Psoas muscle (tissue), 8 donors: ENCODE measurements at regions of chr16 and their contacts with region 1.

Region 1: GRCh38 chr16:75198135-75198600 is 8.8 kb downstream of the CTRB2 start:
- DNase-seq: no peak
- ATAC-seq: no peak
- H3K4me3 ChIP-seq: no peak overlapping the region
- H3K27ac ChIP-seq: no peak overlapping the region
- H3K4me1 ChIP-seq: no peaks in the 10 kb centered on the region
- H3K27me3 ChIP-seq: peaks cover 0 to 22% (median 0%) of the 10 kb centered on the region in 3 donors
- CTCF ChIP-seq: no peak

Region 2: GRCh38 chr16:75138636-75139035 is 59.5 kb before region 1 on chr16:
- intact Hi-C with region 1: no loop called
- DNase-seq: no peak
- ATAC-seq: no peak
- H3K4me3 ChIP-seq: no peak overlapping the region
- H3K27ac ChIP-seq: no peak overlapping the region
- H3K4me1 ChIP-seq: no peaks in the 10 kb centered on the region
- H3K27me3 ChIP-seq: no peaks in the 10 kb centered on the region
- CTCF ChIP-seq: no peak

Region 3: DNA sequence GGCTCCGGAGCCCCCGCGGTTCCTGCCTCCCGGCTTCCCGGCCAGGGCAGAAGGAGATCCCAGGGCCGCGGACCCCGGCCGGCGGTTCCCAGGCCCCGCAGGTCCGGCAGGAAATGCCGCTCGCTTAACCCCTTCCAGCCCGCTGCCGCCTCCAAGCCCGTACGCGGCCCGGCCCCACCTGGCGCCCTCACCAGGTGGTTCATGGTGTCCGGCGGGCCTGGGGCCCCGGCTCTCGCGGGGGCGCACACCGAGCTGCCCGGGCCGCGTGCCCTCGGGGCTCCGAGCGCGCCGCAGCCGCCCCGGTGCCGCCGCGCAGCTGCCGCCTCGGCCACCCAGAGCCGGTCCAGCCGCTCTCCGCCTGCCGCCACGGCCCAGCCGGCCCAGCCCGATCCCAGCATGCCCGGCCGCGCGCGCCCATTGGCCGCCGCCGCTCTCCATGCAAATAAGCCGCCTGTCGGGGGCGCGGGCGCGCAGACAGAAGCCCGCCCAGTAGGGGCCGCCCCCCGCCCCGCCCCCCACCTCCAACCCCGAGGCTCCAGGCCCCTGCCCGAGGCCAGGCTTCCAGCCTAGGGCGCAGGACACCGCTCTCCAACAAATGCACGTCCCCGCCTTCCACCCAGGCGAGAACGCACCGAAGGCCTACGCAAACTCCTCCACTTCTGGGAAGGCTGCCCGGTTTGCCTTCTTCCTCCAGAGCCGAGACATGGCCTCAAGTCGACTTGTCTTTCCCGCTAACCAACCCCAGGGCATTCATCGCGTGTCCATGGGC is 53.3 kb after region 1 on chr16 and contains the start of gene BCAR1:
- intact Hi-C with region 1: no loop called
- DNase-seq: peak; percentile 90 to 92
- ATAC-seq: peak; percentile 54 to 59 (median 57)
- H3K4me3 ChIP-seq: peak within 1 kb of the TSS; percentile 78
- H3K27ac ChIP-seq: peak within 1 kb of the TSS; percentile 93
- H3K4me1 ChIP-seq: peaks cover 84% of the 10 kb centered on the region
- H3K27me3 ChIP-seq: no peaks in the 10 kb centered on the region
- CTCF ChIP-seq: peak; percentile 5
- total RNA-seq, gene BCAR1: 61.8 to 108 (median 90.1) TPM

Region 4: DNA sequence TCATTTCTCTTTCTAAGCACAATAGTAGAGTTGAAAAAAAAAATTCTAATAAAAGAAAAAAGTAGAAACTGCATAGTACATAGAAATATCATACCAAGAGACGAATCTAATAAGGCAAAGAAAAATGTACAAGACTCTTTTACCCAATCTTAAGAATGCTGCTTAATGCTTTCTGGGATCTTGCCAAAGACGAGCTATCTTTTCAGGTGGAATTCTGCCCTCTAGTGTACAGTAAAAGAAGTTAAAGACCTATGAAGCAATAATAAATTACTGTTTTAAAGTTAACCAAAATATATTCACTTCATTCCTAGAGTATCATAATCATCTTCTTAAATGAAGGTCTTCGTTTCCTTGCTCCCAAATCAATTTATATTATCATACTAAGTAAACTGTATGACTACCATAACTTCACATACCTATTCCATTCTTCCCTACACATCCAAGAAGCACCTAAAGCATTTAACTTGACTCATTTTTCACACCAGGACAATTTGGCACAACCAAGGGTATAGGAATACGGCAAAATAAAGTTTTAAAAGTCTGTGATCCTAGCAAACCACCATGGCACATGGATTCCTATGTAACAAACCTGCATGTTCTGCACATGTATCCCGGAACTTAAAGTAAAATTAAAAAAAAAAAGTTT is 187.5 kb after region 1 on chr16:
- intact Hi-C with region 1: loop called (anchors 2 to 5 kb)
- DNase-seq: no peak
- ATAC-seq: peak; percentile 44 to 80 (median 58)
- H3K4me3 ChIP-seq: no peak overlapping the region
- H3K27ac ChIP-seq: no peak overlapping the region
- H3K4me1 ChIP-seq: no peaks in the 10 kb centered on the region
- H3K27me3 ChIP-seq: no peaks in the 10 kb centered on the region
- CTCF ChIP-seq: peak; percentile 86

Region 5: DNA sequence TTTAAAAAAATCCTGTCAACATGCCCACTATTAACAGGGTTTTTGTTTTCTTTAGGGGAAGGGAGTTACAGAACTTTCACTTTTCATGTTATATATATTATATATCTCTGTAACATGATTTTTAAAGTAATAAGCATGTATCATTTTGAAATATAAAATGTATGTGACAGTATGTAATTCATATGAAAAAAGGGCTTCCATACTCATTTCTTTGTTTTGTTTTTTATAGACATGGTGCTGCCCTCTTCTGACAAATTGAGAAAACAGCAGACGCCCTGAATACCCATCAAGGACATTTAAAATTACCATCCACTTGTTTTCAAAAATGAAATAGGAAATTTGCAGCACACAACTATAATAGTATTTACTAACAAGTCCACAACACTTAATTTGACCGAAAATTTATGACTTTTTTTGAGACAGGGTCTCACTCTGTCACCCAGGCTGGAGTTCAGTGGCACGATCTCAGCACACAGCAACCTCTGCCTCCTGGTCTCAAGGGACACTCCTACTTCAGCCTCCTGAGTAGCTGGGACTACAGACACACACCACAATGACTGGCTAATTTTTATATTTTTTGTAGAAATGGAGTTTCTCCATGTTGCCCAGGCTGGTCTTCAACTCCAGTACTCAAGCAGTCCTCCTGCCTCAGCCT is 204.8 kb after region 1 on chr16:
- intact Hi-C with region 1: loop called in 1 of 2 experiments (anchors 5 kb)
- DNase-seq: no peak
- ATAC-seq: peak; percentile 24 to 70 (median 59)
- H3K4me3 ChIP-seq: no peak overlapping the region
- H3K27ac ChIP-seq: peak overlapping the region; percentile 48
- H3K4me1 ChIP-seq: peaks cover 19% of the 10 kb centered on the region
- H3K27me3 ChIP-seq: no peaks in the 10 kb centered on the region
- CTCF ChIP-seq: peak; percentile 54

Region 6: DNA sequence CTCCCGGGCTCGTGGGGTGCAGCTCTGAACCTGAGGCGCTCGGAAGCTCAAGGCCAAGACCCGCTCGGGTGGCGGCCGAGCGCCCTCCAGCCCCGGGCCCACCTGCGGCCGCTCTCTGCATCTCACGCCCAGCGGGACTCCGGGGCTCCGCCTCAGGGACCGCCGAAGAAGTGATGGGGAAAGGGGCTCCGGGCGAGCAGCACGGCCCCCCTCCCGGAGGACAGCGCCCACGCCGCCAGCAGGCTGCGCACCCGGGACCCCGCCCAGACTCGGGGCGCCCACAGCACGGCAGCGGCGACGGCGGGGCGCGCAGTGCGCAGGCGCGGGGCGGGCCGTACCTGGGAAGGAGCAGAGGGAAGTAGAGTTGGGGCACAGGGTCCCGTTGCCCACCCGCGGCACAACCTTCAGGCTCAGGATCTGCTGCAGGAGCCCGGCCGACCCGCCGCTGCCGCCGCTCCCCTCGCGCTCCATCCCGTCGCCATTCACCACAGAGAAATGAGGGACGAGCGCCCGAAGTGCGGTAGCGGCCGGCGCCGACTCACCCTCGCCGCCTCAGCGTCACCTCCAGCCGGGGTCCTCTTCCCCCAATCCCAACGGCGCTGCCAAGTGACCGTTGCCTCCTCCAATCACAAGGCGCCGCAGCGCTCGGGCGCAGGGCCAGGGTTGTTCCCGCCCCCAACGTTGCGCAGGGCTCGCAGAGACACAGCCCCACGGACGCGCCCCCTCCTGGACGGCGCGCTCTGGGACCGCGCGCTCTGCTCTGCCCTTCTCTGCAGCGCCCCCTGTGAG is 266.2 kb after region 1 on chr16 and contains the start of gene TMEM170A:
- intact Hi-C with region 1: loop called in 1 of 2 experiments (anchors 5 kb)
- DNase-seq: peak; percentile 100
- ATAC-seq: peak; percentile 97 to 99 (median 98)
- H3K4me3 ChIP-seq: peak within 1 kb of the TSS; percentile 86
- H3K27ac ChIP-seq: peak within 1 kb of the TSS; percentile 95
- H3K4me1 ChIP-seq: peaks cover 15% of the 10 kb centered on the region
- H3K27me3 ChIP-seq: no peaks in the 10 kb centered on the region
- CTCF ChIP-seq: peak; percentile 100
- total RNA-seq, gene TMEM170A: 5.9 to 7.9 (median 7.0) TPM